ENCODE measurements at regions of chr19 and their contacts with region 1.

Region 1: GRCh38 chr19:51594774-51595109 is 23.7 kb downstream of the ZNF175 start:
- DNase-seq: no peak
- H3K4me3 ChIP-seq: peak overlapping the region; percentile 59
- CTCF ChIP-seq: no peak

Region 2: GRCh38 chr19:51552996-51553725 is 41.6 kb before region 1 on chr19:
- in situ Hi-C with region 1: loop called (anchors 5 kb)
- DNase-seq: peak; percentile 9
- H3K4me3 ChIP-seq: no peak overlapping the region
- CTCF ChIP-seq: no peak